Sigmoid colon (tissue), 7 donors: ENCODE measurements at regions of chr9 and their contacts with region 1.

Region 1: DNA sequence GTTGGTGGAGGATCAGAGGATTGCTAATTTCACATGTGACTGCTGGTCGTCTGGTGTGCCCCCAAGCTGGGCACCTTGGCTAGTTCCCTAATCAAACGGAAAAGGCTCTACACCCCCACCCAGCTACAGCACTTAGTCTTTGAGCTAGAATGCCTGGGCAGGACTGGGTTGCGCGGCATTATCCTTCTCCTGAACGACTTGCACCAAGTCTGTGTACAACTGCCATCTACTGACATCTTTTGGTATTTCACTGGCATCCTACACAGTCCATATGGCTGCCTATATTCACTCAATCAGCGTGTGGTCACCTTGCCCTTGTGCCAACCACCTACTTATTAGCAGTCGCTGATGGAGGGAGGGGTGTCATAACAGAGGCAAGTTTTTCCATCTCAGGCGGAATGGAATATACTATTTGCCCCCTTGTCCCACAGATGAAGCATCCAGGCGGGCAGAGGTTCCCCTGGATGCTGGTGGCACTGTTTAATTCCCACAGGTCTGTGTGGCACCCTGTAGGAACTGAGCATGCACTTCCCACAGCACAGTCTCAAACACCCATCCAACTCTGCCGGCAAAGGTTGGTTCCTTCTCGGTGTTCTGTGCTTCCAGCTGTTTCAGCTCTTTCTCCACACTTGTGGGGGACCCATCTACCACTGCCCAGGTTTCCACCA is 150.1 kb downstream of the OSTF1 start:
- DNase-seq: no peak
- H3K4me3 ChIP-seq: no peak overlapping the region
- H3K27ac ChIP-seq: no peak overlapping the region
- H3K4me1 ChIP-seq: no peaks in the 10 kb centered on the region
- H3K27me3 ChIP-seq: no peaks in the 10 kb centered on the region
- CTCF ChIP-seq: peak in 3 of 4 experiments; percentile 52 to 80 (median 64)
- EP300 ChIP-seq: no peak
- POLR2A ChIP-seq: no peak

Region 2: DNA sequence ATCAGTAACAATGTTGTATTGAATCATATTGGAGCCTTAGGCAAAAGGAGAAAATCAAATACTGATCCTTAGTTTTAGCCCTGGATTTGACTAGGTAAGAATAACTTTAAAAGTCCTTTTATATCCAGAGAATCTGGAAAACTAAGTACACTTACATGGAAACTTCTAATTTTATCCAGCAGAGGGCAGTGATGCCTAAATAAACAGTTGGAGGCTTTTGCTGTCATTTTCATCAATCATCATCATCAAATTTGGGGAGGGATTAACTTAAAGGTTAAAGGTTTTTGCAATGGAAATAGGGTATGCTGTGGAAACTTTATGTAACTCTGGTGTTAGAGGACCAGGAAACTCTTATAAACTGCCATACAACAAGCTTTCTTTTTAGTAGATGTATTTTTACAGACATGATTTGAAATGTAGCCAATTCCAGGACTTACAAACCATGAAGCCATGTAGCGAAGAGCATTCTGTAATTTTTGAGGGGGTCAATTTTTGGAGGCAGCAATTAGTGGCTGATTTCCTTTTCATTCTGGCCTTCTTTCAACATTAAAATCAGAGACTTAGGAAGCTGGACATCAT is 37.5 kb before region 1 on chr9:
- intact Hi-C with region 1: loop called (anchors 1 kb)
- DNase-seq: no peak
- H3K4me3 ChIP-seq: no peak overlapping the region
- H3K27ac ChIP-seq: no peak overlapping the region
- H3K4me1 ChIP-seq: no peaks in the 10 kb centered on the region
- H3K27me3 ChIP-seq: no peaks in the 10 kb centered on the region
- CTCF ChIP-seq: peak in 3 of 4 experiments; percentile 34 to 58 (median 56)
- EP300 ChIP-seq: no peak
- POLR2A ChIP-seq: no peak